Ovary (tissue), 10 donors: ENCODE measurements at regions of chr4 and their contacts with region 1.

Region 1: DNA sequence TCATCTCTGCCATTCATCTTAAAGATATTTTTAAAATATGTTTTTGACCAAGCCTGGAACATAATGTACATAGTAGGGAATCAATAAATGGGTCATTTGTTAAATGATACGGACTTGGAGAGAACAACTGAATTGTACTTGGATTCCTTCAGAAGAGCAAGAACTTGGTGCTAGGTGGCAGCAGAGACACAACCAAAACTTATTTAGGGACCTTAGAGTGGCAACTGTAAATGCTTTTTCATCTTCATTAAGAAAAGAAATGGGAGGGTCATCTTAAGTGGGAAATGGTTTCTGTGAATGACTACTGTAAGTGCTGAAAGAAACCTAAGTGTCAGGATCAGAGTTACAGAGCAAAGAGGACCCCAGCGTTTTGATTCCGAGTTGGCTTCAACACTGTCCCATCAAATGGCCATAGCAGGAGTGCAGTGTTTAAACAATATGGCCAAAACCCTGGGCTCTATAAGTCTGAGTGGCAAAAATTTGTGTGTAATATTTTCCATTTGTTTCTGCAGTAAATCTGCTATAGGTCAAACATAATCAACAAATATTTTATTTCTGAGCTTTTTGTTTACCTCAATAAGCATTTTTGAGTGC is 213.6 kb downstream of the PALLD start:
- DNase-seq: peak in 3 of 5 donors; percentile 40 to 67 (median 56)
- H3K4me3 ChIP-seq: no peak overlapping the region
- H3K27ac ChIP-seq: no peak overlapping the region
- H3K4me1 ChIP-seq: peaks cover 9% of the 10 kb centered on the region
- H3K27me3 ChIP-seq: no peaks in the 10 kb centered on the region
- CTCF ChIP-seq: peak; percentile 9 to 69 (median 56)
- EP300 ChIP-seq: no peak
- POLR2A ChIP-seq: no peak

Region 2: DNA sequence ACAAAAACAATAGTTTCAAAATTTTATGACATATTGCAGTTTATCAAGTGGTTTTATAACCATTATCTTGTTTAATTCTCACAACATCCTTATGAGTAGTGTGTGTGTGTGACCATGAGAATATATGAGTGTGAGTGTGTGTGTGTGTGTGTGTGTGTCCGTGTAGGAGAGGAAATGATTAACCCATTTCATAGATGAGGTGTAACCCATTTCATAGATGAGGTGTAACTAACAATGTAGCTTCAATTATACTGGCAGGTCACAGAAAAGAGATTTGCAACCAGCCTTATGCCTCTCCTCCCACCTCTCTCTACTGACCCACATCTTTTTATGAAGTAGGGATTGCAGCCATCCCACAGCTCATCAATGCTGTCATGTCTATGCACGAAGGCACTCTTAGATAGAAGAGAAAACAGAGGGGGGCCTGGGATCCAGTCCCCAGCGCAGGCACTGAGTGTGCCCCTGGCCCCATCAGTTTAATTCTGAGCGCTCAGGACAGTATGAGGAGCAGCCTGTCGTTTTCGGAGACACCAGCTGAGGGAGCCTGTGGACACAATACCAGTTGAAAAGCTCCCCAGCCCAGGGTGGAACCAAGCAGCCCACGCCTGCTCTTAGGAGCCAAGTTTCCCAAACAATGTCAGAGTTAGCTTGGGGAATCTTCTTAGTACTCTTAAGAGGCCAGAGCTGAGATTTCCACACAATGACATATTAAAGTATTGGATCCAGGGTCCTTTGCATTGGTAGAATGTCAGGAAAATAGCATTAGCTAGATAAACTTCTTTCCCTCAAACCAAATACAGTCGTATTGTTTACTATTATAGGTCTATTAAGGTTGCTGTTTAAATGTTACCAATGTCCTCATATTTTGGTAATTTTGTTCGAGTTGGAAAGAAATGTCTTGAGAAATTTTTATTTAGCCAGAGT is 125.0 kb before region 1 on chr4:
- intact Hi-C with region 1: loop called in 1 of 4 experiments (anchors 10 kb)
- DNase-seq: peak; percentile 77 to 85 (median 82)
- H3K4me3 ChIP-seq: no peak overlapping the region
- H3K27ac ChIP-seq: no peak overlapping the region
- H3K4me1 ChIP-seq: no peaks in the 10 kb centered on the region
- H3K27me3 ChIP-seq: no peaks in the 10 kb centered on the region
- CTCF ChIP-seq: peak; percentile 7 to 58 (median 55)
- EP300 ChIP-seq: no peak
- POLR2A ChIP-seq: no peak

Region 3: GRCh38 chr4:168598191-168598590 is 112.3 kb before region 1 on chr4:
- intact Hi-C with region 1: no loop called
- DNase-seq: no peak
- H3K4me3 ChIP-seq: no peak overlapping the region
- H3K27ac ChIP-seq: no peak overlapping the region
- H3K4me1 ChIP-seq: no peaks in the 10 kb centered on the region
- H3K27me3 ChIP-seq: no peaks in the 10 kb centered on the region
- CTCF ChIP-seq: no peak
- EP300 ChIP-seq: no peak
- POLR2A ChIP-seq: no peak

Region 4: DNA sequence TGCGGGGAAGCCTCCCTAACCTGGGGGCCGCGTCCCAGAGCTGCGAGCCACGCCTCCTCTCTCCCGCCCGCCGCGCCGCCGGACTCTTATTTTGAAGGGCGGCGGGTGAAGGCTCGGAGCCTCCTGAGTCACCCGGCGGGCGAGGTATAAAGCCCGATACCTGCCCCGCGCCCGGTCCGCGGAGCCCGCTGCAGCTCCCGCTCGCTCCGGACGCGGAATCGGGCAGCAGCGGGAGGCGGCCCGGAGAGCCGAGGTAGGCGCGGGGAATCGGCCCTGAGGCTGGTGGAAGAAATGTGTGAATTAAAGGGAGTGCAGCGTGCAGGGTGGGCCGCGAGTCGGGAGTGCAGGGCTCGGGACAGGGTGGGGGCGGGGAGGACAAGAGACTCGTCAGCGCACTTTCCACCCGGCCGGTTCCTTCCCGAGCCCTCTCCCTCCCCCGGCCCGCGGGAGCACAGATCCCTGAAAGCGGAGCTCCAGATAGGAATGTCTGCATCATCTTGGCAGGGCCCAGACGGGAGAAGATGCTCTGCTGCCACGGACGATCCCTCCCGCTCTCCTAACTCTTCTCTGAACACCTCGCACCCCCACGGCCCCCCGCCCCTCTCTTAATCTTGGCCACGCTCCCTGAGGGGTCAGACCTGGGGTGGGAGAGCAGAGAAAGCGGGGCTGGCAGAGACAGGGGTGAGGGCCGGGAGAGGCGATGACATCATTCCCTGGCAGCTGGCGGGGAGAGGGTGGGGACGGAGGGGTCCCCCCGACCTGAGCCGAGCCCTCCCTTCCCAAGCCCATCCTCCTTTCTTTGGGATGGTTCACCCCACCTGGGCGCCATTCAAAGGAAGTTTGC is 121.7 kb after region 1 on chr4:
- intact Hi-C with region 1: loop called in 1 of 4 experiments (anchors 10 kb)
- DNase-seq: peak; percentile 88 to 90 (median 89)
- H3K4me3 ChIP-seq: peak overlapping the region; percentile 96
- H3K27ac ChIP-seq: peak overlapping the region; percentile 80 to 99
- H3K4me1 ChIP-seq: peaks cover 5% of the 10 kb centered on the region
- H3K27me3 ChIP-seq: no peaks in the 10 kb centered on the region
- CTCF ChIP-seq: no peak
- EP300 ChIP-seq: no peak
- POLR2A ChIP-seq: peak; percentile 97

Region 5: DNA sequence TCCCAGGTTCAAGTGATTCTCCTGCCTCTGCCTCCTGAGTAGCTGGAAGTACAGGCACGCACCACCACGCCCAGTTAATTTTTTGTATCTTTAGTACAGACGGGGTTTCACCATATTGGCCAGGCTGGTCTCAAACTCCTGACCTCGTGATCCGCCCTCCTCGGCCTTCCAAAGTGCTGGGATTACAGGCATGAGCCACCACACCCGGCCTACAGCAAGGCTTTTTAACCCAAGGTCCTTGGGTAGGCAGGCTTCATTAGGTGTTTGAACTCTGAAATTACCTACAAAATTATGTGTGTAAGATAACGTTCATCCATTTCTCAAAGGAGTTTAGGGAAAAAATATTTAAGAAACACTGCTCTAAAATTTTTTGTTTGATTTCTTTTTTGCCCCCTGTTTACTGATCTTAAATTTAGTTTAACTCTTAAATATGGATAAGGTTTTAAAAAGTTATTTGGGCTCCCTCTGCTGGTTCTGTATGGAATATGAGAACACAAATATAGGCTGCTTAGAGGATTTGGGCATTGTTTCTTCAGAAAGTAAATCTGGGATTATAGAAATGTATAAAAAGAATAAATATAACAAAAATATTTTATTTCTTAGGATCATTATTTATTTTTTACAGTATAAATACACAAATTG is 206.8 kb after region 1 on chr4:
- intact Hi-C with region 1: loop called (anchors 5 to 10 kb)
- DNase-seq: no peak
- H3K4me3 ChIP-seq: no peak overlapping the region
- H3K27ac ChIP-seq: no peak overlapping the region
- H3K4me1 ChIP-seq: no peaks in the 10 kb centered on the region
- H3K27me3 ChIP-seq: no peaks in the 10 kb centered on the region
- CTCF ChIP-seq: peak; percentile 38 to 67 (median 58)
- EP300 ChIP-seq: no peak
- POLR2A ChIP-seq: no peak

Region 6: GRCh38 chr4:168923526-168924194 is 213.2 kb after region 1 on chr4:
- intact Hi-C with region 1: loop called (anchors 5 to 10 kb)
- DNase-seq: peak in 3 of 5 donors; percentile 38 to 66 (median 64)
- H3K4me3 ChIP-seq: no peak overlapping the region
- H3K27ac ChIP-seq: no peak overlapping the region
- H3K4me1 ChIP-seq: no peaks in the 10 kb centered on the region
- H3K27me3 ChIP-seq: no peaks in the 10 kb centered on the region
- CTCF ChIP-seq: peak; percentile 66 to 75 (median 70)
- EP300 ChIP-seq: no peak
- POLR2A ChIP-seq: no peak